Activated CD8-positive, alpha-beta memory T cell treated with anti-CD3 and anti-CD28 coated beads, Interleukin-2, amount 10 ng/mL, durations not matched to agents 7 days and 5 days (primary cell): ENCODE measurements at regions of chr19 and their contacts with region 1.

Region 1: GRCh38 chr19:47157431-47158321 is 27.0 kb downstream of the SAE1 start:
- DNase-seq: peak; percentile 51
- ATAC-seq: peak; percentile 46
- H3K4me3 Mint-ChIP-seq: peak overlapping the region; percentile 10
- H3K27ac Mint-ChIP-seq: peak overlapping the region; percentile 73
- H3K4me1 Mint-ChIP-seq: peaks cover 44% of the 10 kb centered on the region
- H3K27me3 Mint-ChIP-seq: no peaks in the 10 kb centered on the region

Region 2: DNA sequence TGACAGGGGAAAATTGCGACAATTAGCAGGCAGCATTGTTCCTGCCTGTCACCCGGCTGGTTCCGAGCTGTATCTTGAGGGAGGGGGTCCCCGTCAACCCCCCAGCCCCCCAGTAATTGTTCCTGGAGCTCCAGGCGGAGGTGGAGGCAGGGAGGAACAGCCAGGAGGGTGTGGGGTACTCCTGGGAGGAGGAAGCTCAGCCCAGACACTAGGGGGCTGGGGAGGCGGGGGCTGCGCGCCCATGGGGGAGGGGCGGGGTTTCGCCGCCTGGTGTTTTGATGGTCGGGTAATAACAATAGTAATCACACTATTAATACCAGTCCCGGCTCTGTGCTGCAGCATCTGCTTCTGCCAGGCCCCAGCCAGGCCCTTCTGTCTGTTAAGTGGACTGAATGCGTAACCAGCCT is 129.5 kb before region 1 on chr19:
- CTCF ChIA-PET with region 1: no interaction called
- DNase-seq: no peak
- ATAC-seq: no peak
- H3K4me3 Mint-ChIP-seq: no peak overlapping the region
- H3K27ac Mint-ChIP-seq: no peak overlapping the region
- H3K4me1 Mint-ChIP-seq: peaks cover 11% of the 10 kb centered on the region
- H3K27me3 Mint-ChIP-seq: peaks cover 69% of the 10 kb centered on the region

Region 3: GRCh38 chr19:47225746-47226425 is 68.2 kb after region 1 on chr19:
- CTCF ChIA-PET with region 1: interaction called, 19 read pairs
- DNase-seq: peak; percentile 88
- ATAC-seq: peak; percentile 67
- H3K4me3 Mint-ChIP-seq: peak overlapping the region; percentile 75
- H3K27ac Mint-ChIP-seq: peak overlapping the region; percentile 90
- H3K4me1 Mint-ChIP-seq: peaks cover 18% of the 10 kb centered on the region
- H3K27me3 Mint-ChIP-seq: no peaks in the 10 kb centered on the region

Region 4: DNA sequence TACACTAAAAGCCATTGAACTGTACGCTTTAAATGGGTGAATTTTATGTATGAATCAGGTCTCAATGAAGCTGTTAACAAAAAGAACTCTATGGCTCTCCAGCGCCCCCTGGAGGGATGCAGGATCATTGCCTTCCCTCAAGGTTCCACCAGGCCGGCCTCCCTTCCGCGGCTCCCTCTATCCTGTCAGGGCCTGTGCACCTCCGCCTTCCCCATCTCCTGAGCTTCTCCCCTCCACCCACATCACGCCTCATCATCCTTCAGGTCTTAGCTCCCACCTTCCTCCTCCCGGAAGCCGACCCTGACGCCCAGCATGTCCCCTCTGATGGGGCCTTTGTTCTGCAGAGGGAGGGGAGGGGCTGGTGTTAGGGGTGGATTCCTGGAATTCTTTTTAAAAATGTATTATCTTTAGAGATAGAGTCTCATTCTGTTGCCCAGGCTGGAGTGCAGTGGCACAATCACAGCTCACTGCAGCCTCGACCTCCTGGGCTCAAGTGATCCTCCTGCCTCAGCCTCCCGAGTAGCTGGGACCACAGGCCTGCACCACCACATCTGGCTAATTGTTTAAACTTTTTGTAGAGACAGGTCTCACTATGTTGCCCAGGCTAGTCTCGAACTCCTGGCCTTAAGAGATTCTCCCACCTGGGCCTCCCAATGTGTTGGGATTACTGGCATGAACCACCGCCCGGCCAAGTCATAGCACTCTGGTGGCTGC is 234.0 kb after region 1 on chr19:
- CTCF ChIA-PET with region 1: no interaction called
- DNase-seq: peak; percentile 87
- ATAC-seq: peak; percentile 87
- H3K4me3 Mint-ChIP-seq: no peak overlapping the region
- H3K27ac Mint-ChIP-seq: no peak overlapping the region
- H3K4me1 Mint-ChIP-seq: peaks cover 4% of the 10 kb centered on the region
- H3K27me3 Mint-ChIP-seq: peaks cover 4% of the 10 kb centered on the region